ENCODE measurements at regions of chr12 and their contacts with region 1.

Region 1: DNA sequence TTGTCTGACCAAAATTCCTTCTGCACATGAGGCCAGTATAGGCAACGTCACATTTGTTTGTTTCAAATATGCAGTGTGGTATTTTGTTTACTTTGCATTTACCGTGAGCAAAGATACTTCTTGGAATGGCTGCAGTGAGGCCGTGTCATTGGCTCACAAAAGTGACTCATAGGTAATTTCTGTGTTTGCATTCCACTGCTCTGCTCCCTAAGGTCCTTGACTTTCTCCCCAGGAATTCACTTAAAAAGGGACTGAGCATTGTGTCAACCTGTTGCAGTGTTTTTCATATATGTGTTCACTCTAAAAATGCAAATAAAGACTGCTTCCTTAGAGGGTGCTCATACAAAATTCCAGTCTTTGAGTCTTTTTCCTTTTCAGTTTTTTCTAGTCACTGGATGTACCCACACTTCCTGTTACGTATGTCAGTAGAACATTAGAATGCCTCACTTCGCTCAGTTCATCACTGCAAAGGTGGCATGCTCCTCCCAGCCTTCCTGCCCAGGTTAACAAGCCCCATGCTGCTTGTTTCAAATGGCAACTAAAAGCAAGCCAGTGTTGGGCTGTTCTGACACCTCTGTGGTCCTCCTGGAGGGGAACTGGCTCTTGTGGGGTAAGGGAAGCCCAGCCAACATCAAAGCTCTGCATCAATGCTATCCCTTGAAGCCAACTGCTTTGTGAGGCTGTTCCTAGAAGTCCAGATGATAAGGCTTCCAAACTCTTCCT is 9.1 kb downstream of the C12orf76 start:
- DNase-seq: peak; percentile 56
- ATAC-seq: peak; percentile 67
- H3K4me3 Mint-ChIP-seq: no peak overlapping the region
- H3K27ac Mint-ChIP-seq: peak overlapping the region; percentile 87
- H3K4me1 Mint-ChIP-seq: peaks cover 37% of the 10 kb centered on the region
- H3K27me3 Mint-ChIP-seq: no peaks in the 10 kb centered on the region

Region 2: GRCh38 chr12:110023059-110023606 is 16.1 kb before region 1 on chr12:
- CTCF ChIA-PET with region 1: interaction called, 8 read pairs
- POLR2A ChIA-PET with region 1: interaction called, 13 read pairs
- intact Hi-C with region 1: no loop called
- DNase-seq: no peak
- ATAC-seq: no peak
- H3K4me3 Mint-ChIP-seq: no peak overlapping the region
- H3K27ac Mint-ChIP-seq: no peak overlapping the region
- H3K4me1 Mint-ChIP-seq: peaks cover 17% of the 10 kb centered on the region
- H3K27me3 Mint-ChIP-seq: no peaks in the 10 kb centered on the region

Region 3: DNA sequence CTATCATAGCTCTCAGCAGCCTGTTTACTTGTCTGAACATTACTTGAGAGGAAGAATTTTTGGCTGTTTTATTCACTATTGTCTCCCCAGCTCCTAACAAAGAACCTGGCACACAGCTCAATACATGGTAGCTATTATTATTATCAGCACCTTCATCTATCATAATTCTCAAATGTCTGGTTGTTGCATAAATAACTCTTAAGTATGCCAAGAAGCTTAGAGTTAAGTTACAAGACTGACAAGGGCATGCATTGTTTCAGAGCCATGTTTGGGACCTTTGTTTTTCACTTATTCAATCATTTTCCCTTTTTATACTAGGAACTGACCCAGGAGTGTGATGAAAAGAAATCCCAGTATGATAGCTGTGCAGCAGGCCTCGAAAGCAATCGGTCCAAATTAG is 164.3 kb after region 1 on chr12:
- CTCF ChIA-PET with region 1: no interaction called
- POLR2A ChIA-PET with region 1: no interaction called
- intact Hi-C with region 1: no loop called
- DNase-seq: no peak
- ATAC-seq: no peak
- H3K4me3 Mint-ChIP-seq: no peak overlapping the region
- H3K27ac Mint-ChIP-seq: no peak overlapping the region
- H3K4me1 Mint-ChIP-seq: peaks cover 8% of the 10 kb centered on the region
- H3K27me3 Mint-ChIP-seq: no peaks in the 10 kb centered on the region

Measured in activated CD4-positive, alpha-beta T cell treated with anti-CD3 and anti-CD28 coated beads for 36 hours (primary cell).